Posterior vena cava (tissue), 2 donors: ENCODE measurements at regions of chr3 and their contacts with region 1.

Region 1: DNA sequence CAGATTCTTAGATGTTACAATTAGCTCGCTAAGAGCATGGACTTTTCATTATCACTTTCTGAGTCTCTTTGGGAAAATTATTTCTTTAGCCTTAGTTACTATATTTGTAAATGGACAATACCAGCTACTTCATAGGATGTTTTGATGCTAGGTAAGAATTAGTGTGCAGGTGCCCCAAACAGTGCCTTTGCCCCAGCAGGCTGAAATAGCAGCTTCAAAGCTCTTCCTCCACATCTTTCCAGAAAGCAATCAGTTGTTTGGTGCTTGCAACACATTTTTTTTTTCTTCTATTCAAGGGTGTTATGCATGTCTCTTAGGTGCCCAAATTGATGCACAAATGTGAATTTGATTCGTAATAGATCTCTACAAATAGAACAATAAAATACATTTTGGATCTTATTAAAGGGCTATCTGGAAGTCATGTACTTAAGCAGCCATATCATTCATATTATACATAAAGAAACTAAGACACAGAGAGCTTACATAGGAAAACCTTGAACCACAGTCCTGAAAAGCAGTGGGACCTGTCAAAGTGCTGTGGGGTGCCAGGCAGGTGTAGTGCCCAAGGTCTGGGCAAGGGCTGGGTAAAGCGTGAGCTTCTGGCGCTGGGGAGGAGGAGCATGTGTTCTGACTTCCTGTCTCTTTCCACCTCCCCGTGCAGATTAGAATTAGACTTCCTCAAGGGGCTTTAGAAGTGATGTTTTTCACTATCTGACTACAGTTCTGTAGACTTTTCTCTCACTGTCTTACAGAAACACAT is 62.9 kb downstream of the FNDC3B start:
- DNase-seq: no peak

Region 2: DNA sequence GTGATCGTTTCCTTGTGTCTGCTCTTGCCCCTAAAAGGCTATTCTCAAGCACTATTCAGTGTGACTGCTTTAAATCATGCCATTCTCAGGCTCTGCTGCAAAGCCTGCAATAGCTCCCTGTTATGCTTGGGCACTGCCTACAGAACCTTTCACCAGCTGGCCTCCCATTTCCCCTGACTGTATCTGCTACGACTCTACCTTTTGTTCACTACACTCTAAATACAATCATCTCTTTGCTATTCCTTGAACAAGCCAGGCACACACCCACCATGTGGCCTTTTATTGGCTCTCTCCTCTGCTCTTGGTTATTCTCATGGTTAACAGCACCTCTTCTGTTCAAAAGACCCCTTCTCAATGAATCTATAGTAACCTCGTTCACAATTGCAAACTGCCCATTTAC is 92.5 kb before region 1 on chr3:
- intact Hi-C with region 1: no loop called
- DNase-seq: no peak

Region 3: DNA sequence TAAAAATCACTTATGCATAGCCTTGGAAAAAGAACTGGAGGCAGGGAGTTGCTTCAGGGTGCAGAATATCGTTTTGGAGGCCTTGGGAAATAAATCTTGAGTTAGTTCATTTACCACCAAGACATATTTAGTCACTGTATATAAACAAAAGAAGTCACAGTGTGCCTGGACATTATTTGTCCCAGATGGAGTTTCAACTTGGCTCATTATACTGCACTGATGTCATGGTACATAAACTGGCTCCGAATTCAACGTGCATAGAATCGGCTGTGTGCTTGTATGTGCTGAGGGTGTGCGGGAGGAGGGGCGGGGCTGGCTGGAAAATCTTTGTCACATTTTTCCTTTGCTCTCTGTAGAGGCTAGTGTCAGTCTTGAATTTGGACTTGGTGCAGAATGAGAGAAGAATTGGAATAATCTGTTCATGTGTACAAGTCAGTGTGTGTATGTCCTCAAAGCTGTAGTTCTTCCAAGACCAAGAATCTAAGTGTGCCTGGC is 23.7 kb after region 1 on chr3:
- intact Hi-C with region 1: loop called in 1 of 2 experiments (anchors 2 kb)
- DNase-seq: peak; percentile 87